MCF 10A (cell line): ENCODE measurements at regions of chr20 and their contacts with region 1.

Region 1: DNA sequence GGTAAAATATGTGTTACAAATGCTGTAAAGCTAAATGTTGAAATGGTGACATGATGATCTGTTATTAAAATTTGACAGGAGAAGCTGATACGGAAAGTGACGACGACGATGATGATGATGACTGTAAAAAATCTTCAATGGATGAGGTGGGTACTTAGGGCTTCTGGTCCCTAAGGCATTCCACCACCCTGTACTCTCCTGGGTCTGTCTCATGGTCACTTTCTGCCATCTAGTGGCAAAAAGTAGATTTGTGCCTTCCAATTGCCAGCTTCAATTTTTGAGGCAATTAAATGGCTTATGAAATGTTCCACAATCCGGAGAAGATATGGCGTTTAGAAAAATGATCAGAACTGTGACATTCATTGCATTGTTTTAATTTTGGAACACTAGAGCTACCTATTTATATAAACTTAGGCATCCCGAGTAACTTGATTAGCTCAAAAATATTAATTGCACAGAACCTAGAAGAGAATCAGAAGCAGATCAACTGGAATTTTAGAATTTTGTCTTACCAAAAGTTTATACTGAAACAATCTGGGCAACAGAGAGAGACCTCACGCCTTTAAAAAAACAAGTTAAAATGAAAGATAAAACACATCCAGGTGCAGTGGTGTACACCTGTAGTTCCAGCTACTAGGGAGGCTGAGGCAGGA is 346.5 kb upstream of the PLCB4 start:
- DNase-seq: peak; percentile 75
- H3K4me3 Mint-ChIP-seq: no peak overlapping the region
- H3K27ac Mint-ChIP-seq: no peak overlapping the region
- H3K4me1 Mint-ChIP-seq: peaks cover 11% of the 10 kb centered on the region
- H3K27me3 Mint-ChIP-seq: no peaks in the 10 kb centered on the region
- CTCF ChIP-seq: peak; percentile 75

Region 2: GRCh38 chr20:7959484-7959883 is 762.9 kb before region 1 on chr20:
- CTCF ChIA-PET with region 1: interaction called, 10 read pairs
- POLR2A ChIA-PET with region 1: no interaction called
- intact Hi-C with region 1: no loop called
- DNase-seq: peak; percentile 74
- H3K4me3 Mint-ChIP-seq: no peak overlapping the region
- H3K27ac Mint-ChIP-seq: no peak overlapping the region
- H3K4me1 Mint-ChIP-seq: peaks cover 6% of the 10 kb centered on the region
- H3K27me3 Mint-ChIP-seq: peaks cover 6% of the 10 kb centered on the region
- CTCF ChIP-seq: no peak

Region 3: GRCh38 chr20:8019246-8019997 is 703.0 kb before region 1 on chr20 and contains the start of gene TMX4:
- CTCF ChIA-PET with region 1: interaction called, 18 read pairs
- POLR2A ChIA-PET with region 1: interaction called, 11 read pairs
- intact Hi-C with region 1: no loop called
- DNase-seq: peak; percentile 95
- H3K4me3 Mint-ChIP-seq: peak within 1 kb of the TSS; percentile 92
- H3K27ac Mint-ChIP-seq: peak within 1 kb of the TSS; percentile 68
- H3K4me1 Mint-ChIP-seq: peaks cover 13% of the 10 kb centered on the region
- H3K27me3 Mint-ChIP-seq: no peaks in the 10 kb centered on the region
- CTCF ChIP-seq: peak; percentile 17
- total RNA-seq, gene TMX4: 47.4 and 60.5 TPM in 2 replicates

Region 4: GRCh38 chr20:8139899-8140298 is 582.5 kb before region 1 on chr20:
- CTCF ChIA-PET with region 1: interaction called, 357 read pairs
- POLR2A ChIA-PET with region 1: no interaction called
- intact Hi-C with region 1: no loop called
- DNase-seq: no peak
- H3K4me3 Mint-ChIP-seq: no peak overlapping the region
- H3K27ac Mint-ChIP-seq: no peak overlapping the region
- H3K4me1 Mint-ChIP-seq: peaks cover 8% of the 10 kb centered on the region
- H3K27me3 Mint-ChIP-seq: peaks cover 11% of the 10 kb centered on the region
- CTCF ChIP-seq: no peak

Region 5: DNA sequence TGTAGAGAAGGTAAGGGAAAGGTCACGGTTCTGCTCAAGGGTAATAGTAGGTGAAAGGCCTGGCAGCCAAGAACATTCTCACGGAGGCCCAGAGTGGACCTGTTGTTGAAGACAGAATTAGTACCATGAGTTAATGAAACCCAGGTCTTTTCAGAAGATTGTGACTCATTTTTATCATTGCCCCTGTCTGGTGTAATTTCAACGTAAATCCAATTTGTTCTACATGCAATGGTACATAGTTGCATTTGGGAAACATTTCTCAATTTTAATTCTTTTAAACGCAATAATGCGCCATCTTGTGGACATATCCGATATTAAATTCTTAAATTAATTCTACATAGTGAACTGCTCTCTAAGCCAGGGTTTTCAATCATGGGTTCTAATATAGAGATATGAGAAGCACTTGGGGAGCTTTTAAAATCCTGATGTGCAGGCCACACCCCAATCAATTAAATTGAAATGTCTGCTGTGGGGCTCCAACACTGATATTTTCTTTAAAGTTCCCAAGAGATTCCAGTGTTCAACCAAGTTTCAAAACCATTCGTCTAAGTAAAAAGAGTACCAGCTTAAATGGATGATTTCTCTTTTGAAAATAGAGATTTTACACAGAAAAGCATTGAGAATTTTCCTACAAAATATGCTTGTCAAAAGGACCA is 332.9 kb before region 1 on chr20:
- CTCF ChIA-PET with region 1: interaction called, 133 read pairs
- POLR2A ChIA-PET with region 1: interaction called, 3 read pairs
- intact Hi-C with region 1: loop called (anchors 1 kb)
- DNase-seq: peak; percentile 47
- H3K4me3 Mint-ChIP-seq: no peak overlapping the region
- H3K27ac Mint-ChIP-seq: no peak overlapping the region
- H3K4me1 Mint-ChIP-seq: peaks cover 12% of the 10 kb centered on the region
- H3K27me3 Mint-ChIP-seq: no peaks in the 10 kb centered on the region
- CTCF ChIP-seq: peak; percentile 35

Region 6: DNA sequence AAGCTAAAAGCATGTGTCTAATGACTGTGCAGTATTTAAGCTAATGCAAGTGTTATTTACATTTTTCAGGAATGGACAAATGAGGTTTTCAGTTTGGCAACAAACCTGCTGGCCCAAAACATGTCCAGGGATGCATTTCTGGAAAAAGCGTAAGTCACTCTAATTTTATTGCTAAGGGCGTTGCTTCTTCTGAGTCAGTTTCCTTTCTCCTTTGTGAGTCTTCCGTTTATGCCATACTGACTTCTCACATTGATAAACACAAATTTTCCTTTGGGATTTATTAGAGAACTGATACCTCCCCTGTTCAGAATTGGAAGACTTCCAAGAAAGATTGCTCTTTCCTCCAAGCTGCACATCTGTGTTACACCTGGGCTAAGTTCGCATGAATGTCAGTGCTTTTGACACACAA is 76.4 kb before region 1 on chr20:
- CTCF ChIA-PET with region 1: interaction called, 13 read pairs
- POLR2A ChIA-PET with region 1: no interaction called
- intact Hi-C with region 1: no loop called
- DNase-seq: peak; percentile 60
- H3K4me3 Mint-ChIP-seq: no peak overlapping the region
- H3K27ac Mint-ChIP-seq: peak overlapping the region; percentile 87
- H3K4me1 Mint-ChIP-seq: peaks cover 38% of the 10 kb centered on the region
- H3K27me3 Mint-ChIP-seq: no peaks in the 10 kb centered on the region
- CTCF ChIP-seq: no peak

Region 7: GRCh38 chr20:8749986-8750385 is 27.6 kb after region 1 on chr20:
- CTCF ChIA-PET with region 1: interaction called, 27 read pairs
- POLR2A ChIA-PET with region 1: no interaction called
- intact Hi-C with region 1: no loop called
- DNase-seq: no peak
- H3K4me3 Mint-ChIP-seq: no peak overlapping the region
- H3K27ac Mint-ChIP-seq: no peak overlapping the region
- H3K4me1 Mint-ChIP-seq: peaks cover 5% of the 10 kb centered on the region
- H3K27me3 Mint-ChIP-seq: no peaks in the 10 kb centered on the region
- CTCF ChIP-seq: no peak

Region 8: GRCh38 chr20:8777911-8778310 is 55.5 kb after region 1 on chr20:
- CTCF ChIA-PET with region 1: no interaction called
- POLR2A ChIA-PET with region 1: no interaction called
- intact Hi-C with region 1: no loop called
- DNase-seq: no peak
- H3K4me3 Mint-ChIP-seq: no peak overlapping the region
- H3K27ac Mint-ChIP-seq: no peak overlapping the region
- H3K4me1 Mint-ChIP-seq: no peaks in the 10 kb centered on the region
- H3K27me3 Mint-ChIP-seq: no peaks in the 10 kb centered on the region
- CTCF ChIP-seq: no peak